Activated CD8-positive, alpha-beta T cell treated with anti-CD3 and anti-CD28 coated beads for 36 hours (primary cell): ENCODE measurements at regions of chr12 and their contacts with region 1.

Region 1: GRCh38 chr12:99043319-99043914 is 398.3 kb downstream of the APAF1 start:
- DNase-seq: peak; percentile 74
- ATAC-seq: peak; percentile 56
- H3K4me3 Mint-ChIP-seq: no peak overlapping the region
- H3K27ac Mint-ChIP-seq: no peak overlapping the region
- H3K4me1 Mint-ChIP-seq: no peaks in the 10 kb centered on the region
- H3K27me3 Mint-ChIP-seq: peaks cover 3% of the 10 kb centered on the region
- CTCF ChIP-seq: peak; percentile 77

Region 2: DNA sequence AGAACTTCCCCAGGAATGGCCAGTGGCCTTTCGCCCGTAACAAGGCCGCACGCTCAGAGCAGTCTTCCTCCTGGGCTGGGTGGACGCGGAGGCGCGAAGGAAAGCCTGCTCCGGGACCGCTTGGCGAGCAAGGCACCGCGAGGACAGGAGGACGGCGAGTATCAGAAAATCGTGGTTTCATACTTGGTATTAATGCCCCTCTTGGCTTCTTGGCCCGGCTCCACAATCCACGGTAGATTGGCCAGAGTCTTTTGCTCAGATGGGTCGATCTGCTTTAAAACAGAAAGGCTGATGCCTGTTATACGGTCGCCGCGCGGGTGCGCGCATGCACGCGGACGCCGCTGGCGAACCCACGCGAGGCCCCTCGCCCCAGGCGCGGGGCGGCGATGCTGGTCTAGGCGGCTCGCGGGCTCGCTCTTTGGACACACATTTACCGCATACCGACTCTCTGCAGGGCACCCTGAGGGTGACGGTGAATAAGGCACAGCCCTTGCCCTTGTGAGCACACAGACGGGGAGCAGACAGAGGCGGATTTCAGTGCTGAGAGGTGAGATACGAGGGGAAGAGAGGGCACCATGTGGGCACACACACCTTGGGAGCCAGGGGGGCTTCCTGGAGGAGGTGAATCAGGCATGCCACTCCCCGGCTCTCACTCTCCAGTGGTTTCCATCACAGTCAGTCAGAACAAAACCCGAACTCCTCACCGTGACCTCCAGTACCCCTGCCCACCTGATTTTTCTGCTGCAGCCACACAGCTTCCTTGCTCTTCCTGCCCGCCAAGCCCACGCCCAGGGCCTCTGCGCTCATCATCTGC is 297.6 kb before region 1 on chr12:
- CTCF ChIA-PET with region 1: no interaction called
- POLR2A ChIA-PET with region 1: no interaction called
- intact Hi-C with region 1: no loop called
- DNase-seq: peak; percentile 56
- ATAC-seq: peak; percentile 54
- H3K4me3 Mint-ChIP-seq: peak overlapping the region; percentile 64
- H3K27ac Mint-ChIP-seq: peak overlapping the region; percentile 11
- H3K4me1 Mint-ChIP-seq: peaks cover 23% of the 10 kb centered on the region
- H3K27me3 Mint-ChIP-seq: peaks cover 34% of the 10 kb centered on the region
- CTCF ChIP-seq: no peak

Region 3: DNA sequence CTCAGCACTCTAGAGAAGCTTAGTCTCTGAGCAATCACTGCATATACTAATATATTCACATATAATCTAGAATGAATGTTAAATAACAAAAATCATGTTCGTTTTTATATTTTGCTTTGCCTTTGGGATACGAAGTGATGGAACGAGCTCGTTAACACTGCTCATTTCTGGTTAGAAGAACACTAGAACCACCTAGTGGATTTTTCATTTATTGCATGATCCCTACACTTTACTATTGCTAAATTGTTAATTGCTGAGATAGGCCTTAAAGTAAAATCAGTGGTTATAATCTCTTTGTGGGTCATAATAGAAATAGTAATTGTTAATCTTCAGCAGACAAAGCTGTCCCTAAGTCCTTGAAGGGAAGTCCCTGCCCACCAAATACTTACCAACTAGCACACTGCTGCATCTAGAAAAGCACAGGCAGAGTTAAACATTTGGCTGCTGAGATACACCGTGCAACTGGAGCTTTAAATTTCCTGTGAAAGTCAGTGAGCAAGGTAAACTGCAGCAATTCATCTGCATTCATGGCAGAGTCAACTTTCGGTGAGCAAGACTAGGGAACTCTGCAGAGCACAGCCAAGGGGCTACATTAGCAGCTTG is 44.6 kb before region 1 on chr12:
- CTCF ChIA-PET with region 1: no interaction called
- POLR2A ChIA-PET with region 1: no interaction called
- intact Hi-C with region 1: no loop called
- DNase-seq: no peak
- ATAC-seq: peak; percentile 79
- H3K4me3 Mint-ChIP-seq: no peak overlapping the region
- H3K27ac Mint-ChIP-seq: no peak overlapping the region
- H3K4me1 Mint-ChIP-seq: no peaks in the 10 kb centered on the region
- H3K27me3 Mint-ChIP-seq: peaks cover 4% of the 10 kb centered on the region
- CTCF ChIP-seq: peak; percentile 69

Region 4: DNA sequence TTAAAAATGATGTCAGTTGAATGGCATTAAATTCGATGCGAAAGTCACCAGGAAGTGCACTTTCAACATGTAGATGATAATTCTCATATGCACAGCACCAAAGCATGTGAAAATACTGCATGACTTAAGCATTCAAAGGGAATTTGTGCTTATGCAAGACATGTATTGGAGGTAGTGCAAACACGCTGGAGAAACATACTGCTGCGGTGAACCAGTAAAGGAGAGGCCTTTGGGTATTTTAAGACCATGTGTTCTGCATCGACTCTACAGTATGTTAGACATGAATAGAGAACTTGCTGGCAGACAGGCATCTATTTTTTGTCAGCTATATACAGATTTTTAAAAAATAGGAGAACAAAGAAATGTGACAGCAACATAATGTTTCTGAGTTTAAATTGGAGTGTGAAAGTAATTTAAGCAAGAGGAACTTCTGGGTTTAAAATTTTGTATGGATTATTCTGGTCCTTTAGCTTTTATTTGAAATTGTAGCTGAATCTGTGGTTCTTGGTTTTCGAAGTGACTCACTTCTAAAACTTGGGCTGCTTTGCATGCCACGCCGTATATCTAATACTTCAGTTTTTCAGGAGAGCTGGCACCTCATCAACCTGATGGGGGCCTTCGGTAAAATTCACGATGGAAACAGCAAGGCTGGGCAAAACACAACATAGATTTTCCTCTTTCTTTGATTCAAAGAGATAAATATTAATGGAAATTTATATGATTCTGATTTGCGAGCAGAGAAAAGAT is 10.4 kb after region 1 on chr12:
- CTCF ChIA-PET with region 1: interaction called, 13 read pairs
- POLR2A ChIA-PET with region 1: interaction called, 3 read pairs
- intact Hi-C with region 1: no loop called
- DNase-seq: no peak
- ATAC-seq: no peak
- H3K4me3 Mint-ChIP-seq: no peak overlapping the region
- H3K27ac Mint-ChIP-seq: no peak overlapping the region
- H3K4me1 Mint-ChIP-seq: no peaks in the 10 kb centered on the region
- H3K27me3 Mint-ChIP-seq: no peaks in the 10 kb centered on the region
- CTCF ChIP-seq: no peak

Region 5: DNA sequence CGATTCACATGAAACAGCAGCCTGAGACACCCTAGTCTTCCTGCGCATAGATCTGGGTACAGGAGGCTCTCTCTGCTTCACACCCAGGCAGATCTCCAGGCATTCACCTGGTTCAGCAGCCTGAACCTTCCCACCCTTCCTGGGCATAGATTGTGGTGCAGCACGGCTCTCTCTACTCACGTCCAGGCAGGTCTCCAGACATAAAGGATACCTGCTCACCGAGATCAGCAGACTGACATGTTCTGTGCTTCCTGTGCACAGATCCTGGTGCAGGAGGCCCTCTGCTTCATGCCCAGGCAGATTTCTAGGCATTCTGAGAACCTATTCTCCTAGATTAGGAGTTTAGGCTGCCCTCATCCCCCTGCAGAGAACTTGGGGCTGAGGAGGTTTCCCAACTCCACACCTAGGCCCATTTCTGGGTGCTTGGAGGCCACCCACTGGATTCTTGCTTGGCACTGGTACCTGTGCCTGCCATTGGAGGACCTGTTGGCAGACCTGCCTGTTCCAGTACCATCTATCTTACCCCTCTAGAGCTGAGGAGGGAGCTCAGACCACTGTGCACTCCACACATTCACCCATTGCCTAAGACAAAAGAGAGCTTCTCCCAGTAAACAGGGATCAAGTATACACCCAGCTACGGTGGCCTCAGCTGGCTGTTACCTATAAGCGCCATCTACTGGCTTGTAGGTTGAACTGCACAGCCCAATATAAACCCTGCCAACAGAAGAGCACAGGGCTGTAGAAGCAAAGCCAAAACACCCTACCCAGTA is 576.2 kb after region 1 on chr12:
- CTCF ChIA-PET with region 1: interaction called, 5 read pairs
- POLR2A ChIA-PET with region 1: no interaction called
- intact Hi-C with region 1: loop called (anchors 5 kb)
- DNase-seq: peak; percentile 16
- ATAC-seq: peak; percentile 61
- H3K4me3 Mint-ChIP-seq: no peak overlapping the region
- H3K27ac Mint-ChIP-seq: no peak overlapping the region
- H3K4me1 Mint-ChIP-seq: no peaks in the 10 kb centered on the region
- H3K27me3 Mint-ChIP-seq: no peaks in the 10 kb centered on the region
- CTCF ChIP-seq: peak; percentile 74